CD4-positive, alpha-beta T cell (primary cell): ENCODE measurements at regions of chr4 and their contacts with region 1.

Region 1: DNA sequence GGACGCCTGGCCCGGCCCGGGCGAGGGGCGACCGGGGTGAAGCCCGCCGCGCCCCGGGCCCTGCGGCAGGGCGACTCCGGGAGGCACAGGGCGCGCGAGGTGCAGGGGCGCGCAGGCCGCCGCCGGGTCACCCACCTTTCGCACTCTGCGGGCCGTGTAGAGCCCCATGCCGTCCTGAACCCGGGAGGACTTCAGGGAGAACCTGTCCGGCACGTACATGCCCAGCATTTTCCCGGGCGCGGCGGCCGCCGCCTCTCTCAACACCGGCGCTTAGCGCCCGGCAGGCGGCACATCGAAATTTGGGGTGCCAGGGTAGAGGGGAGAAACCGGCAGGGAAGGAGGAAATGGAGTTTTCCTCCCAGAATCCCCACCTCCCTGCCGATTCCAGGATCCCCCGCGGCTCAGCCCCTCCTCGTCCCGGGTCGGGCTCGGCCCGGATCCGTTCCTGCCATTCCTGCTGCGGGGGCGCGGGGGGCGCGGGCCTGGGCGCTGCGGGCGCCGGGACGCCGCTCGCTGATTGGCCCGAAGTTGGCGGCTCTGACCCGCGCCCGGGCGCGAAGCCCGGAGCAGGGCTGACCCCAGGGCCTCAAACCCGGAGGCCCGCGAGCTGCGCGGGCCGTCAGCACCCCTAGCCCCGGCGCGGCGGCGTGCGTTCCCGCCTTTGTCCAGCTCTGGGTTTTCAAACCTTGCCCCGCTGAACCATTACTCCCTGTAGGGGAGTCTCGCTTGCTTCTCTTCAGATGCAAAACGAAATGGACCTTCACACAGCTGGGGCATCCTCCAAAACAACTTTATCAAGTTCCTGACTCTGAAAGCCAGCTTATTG is at the start of gene PRDM5:
- DNase-seq: peak in 11 of 14 experiments; percentile 3 to 44 (median 13)
- ATAC-seq: peak; percentile 50
- H3K4me3 ChIP-seq: peak within 1 kb of the TSS; percentile 61
- H3K4me3 Mint-ChIP-seq: peak within 1 kb of the TSS; percentile 91
- H3K27ac ChIP-seq: no peak within 1 kb of the TSS
- H3K27ac Mint-ChIP-seq: peak within 1 kb of the TSS; percentile 56
- H3K4me1 ChIP-seq: peaks cover 16% of the 10 kb centered on the region
- H3K4me1 Mint-ChIP-seq: peaks cover 14% of the 10 kb centered on the region
- H3K27me3 ChIP-seq: peaks cover 7 to 9% of the 10 kb centered on the region in 2 experiments
- H3K27me3 Mint-ChIP-seq: peaks cover 39% of the 10 kb centered on the region
- CTCF ChIP-seq: no peak
- total RNA-seq, gene PRDM5: 0.14 to 0.22 TPM

Region 2: DNA sequence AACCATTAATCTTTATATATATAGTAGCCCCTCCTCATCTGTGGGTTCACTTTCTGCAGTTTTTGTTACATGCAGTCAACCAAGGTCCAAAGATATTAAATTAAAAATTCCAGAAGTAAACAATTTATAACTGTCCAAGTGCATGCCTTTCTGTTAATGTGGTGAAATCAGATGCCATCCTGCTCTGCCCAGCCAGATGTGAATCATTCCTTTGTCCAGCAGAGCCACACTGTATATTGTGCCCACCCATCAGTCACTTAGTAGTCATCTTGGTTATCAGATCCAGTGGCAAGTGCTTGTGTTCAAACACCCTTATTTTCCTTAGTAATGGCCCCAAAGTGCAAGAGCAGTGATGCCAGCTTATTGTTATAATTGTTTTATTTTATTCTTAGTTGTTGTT is 17.1 kb after region 1 on chr4:
- CTCF ChIA-PET with region 1: no interaction called
- POLR2A ChIA-PET with region 1: no interaction called
- intact Hi-C with region 1: no loop called
- DNase-seq: no peak
- ATAC-seq: no peak
- H3K4me3 ChIP-seq: no peak overlapping the region
- H3K4me3 Mint-ChIP-seq: no peak overlapping the region
- H3K27ac ChIP-seq: no peak overlapping the region
- H3K27ac Mint-ChIP-seq: no peak overlapping the region
- H3K4me1 ChIP-seq: no peaks in the 10 kb centered on the region
- H3K4me1 Mint-ChIP-seq: no peaks in the 10 kb centered on the region
- H3K27me3 ChIP-seq: peaks cover 0 to 5% of the 10 kb centered on the region in 2 experiments
- H3K27me3 Mint-ChIP-seq: peaks cover 20% of the 10 kb centered on the region
- CTCF ChIP-seq: no peak

Region 3: DNA sequence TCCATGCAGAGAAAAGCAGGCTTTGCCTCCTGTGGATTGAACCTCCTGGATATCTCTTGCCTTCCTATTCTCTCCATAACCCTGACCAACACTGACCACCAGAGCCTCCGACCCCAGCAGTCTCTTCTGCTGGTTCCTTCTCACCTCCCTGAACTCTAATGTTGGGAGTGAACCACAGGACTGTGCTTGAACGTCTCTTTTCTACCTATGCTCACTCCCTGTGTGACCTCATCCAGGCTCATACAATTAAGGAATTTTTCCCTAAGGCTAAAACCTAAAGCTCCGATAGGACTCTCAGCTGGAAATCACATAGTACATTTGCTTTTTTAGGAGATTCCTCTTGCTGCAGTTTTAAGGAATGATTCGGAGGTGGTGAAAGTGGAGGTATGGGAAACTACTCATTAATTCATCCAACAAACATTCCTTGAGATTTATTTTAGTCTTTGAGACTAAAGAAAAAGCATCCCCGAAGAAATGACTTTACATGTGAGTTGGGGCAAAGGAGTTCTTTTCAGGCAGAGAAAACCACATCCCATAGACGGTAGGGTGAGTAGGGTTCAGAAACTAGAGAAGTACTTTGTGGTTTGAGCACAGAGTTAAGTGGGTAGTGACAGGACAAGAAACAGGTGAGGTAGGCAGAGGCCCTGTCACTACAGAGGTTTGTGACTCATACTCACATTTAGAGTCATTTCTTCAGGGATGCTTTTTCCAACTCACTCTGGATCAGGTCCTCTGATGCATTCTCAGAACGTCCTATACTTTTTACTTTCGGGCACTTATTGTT is 118.9 kb after region 1 on chr4:
- CTCF ChIA-PET with region 1: no interaction called
- POLR2A ChIA-PET with region 1: no interaction called
- intact Hi-C with region 1: loop called in 1 of 2 experiments (anchors 10 kb)
- DNase-seq: peak in 4 of 14 experiments; percentile 28 to 58 (median 36)
- ATAC-seq: peak; percentile 98
- H3K4me3 ChIP-seq: no peak overlapping the region
- H3K4me3 Mint-ChIP-seq: no peak overlapping the region
- H3K27ac ChIP-seq: no peak overlapping the region
- H3K27ac Mint-ChIP-seq: peak overlapping the region; percentile 2
- H3K4me1 ChIP-seq: peaks cover 4% of the 10 kb centered on the region
- H3K4me1 Mint-ChIP-seq: peaks cover 17% of the 10 kb centered on the region
- H3K27me3 ChIP-seq: no peaks in the 10 kb centered on the region
- H3K27me3 Mint-ChIP-seq: peaks cover 3% of the 10 kb centered on the region
- CTCF ChIP-seq: no peak